CD4-positive, alpha-beta memory T cell (primary cell): ENCODE measurements at regions of chr1 and their contacts with region 1.

Region 1: DNA sequence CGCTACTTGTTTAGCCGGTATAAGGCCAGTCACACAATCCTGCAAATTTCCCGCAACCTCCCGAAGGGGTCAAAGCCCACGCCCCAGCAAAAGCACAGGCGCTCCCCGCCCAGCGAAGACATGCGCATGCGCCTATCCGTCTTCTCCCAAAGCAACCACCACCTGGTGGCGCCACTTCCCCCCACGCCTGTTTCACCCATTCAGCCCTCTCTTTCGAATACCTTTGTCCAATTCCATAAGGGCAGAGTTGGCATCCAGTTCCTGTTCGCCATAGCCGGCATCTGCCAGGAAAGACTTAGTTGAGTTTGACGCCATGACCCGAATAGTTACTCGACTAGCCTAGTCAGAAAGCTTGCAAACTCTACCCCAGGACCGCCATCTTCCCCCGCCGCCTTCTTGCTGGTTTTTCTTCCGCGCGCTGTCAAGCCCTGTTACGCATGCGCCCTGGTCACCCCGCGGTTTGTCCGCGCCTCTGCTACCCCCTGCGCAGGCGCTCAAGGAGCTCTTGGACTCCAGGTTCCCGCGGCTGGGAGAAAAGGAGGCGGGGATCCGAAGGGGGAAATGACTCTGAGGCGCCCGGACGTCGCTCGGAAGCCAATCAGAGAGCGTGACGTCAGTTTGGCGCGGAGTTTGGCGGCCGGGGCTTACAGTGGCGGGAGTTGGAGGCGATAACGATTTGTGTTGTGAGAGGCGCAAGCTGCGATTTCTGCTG is at the starts of genes DTL and INTS7:
- DNase-seq: peak; percentile 99
- H3K4me3 ChIP-seq: peak within 1 kb of the TSS; percentile 68 to 78
- H3K4me3 Mint-ChIP-seq: peak within 1 kb of the TSS; percentile 90 to 99 (median 98)
- H3K27ac ChIP-seq: peak within 1 kb of the TSS; percentile 75
- H3K27ac Mint-ChIP-seq: peak within 1 kb of the TSS; percentile 92 to 99 (median 98)
- H3K4me1 ChIP-seq: peaks cover 58% of the 10 kb centered on the region
- H3K4me1 Mint-ChIP-seq: peaks cover 36 to 70% (median 48%) of the 10 kb centered on the region in 4 donors
- H3K27me3 ChIP-seq: no peaks in the 10 kb centered on the region
- H3K27me3 Mint-ChIP-seq: no peaks in the 10 kb centered on the region
- total RNA-seq, gene DTL: 0.06 to 0.15 TPM
- total RNA-seq, gene INTS7: 9.5 to 12.4 TPM

Region 2: GRCh38 chr1:211680752-211681327 is 354.4 kb before region 1 on chr1:
- CTCF ChIA-PET with region 1: interaction called, 53 read pairs
- POLR2A ChIA-PET with region 1: interaction called, 13 read pairs
- intact Hi-C with region 1: loop called (anchors 1 kb)
- DNase-seq: peak; percentile 76 to 83 (median 82)
- H3K4me3 ChIP-seq: no peak overlapping the region
- H3K4me3 Mint-ChIP-seq: peak overlapping the region in 4 of 8 donors; percentile 0 to 56 (median 17)
- H3K27ac ChIP-seq: peak overlapping the region; percentile 61
- H3K27ac Mint-ChIP-seq: peak overlapping the region; percentile 77 to 98 (median 92)
- H3K4me1 ChIP-seq: peaks cover 15% of the 10 kb centered on the region
- H3K4me1 Mint-ChIP-seq: peaks cover 9 to 26% (median 12%) of the 10 kb centered on the region in 4 donors
- H3K27me3 ChIP-seq: no peaks in the 10 kb centered on the region
- H3K27me3 Mint-ChIP-seq: no peaks in the 10 kb centered on the region

Region 3: GRCh38 chr1:212012034-212012740 is 23.1 kb before region 1 on chr1:
- CTCF ChIA-PET with region 1: interaction called, 28 read pairs
- POLR2A ChIA-PET with region 1: no interaction called
- intact Hi-C with region 1: loop called (anchors 1 kb)
- DNase-seq: peak; percentile 42 to 66 (median 53)
- H3K4me3 ChIP-seq: no peak overlapping the region
- H3K4me3 Mint-ChIP-seq: no peak overlapping the region
- H3K27ac ChIP-seq: no peak overlapping the region
- H3K27ac Mint-ChIP-seq: peak overlapping the region in 1 of 7 donors; percentile 3
- H3K4me1 ChIP-seq: no peaks in the 10 kb centered on the region
- H3K4me1 Mint-ChIP-seq: peaks cover 0 to 7% (median 4%) of the 10 kb centered on the region in 4 donors
- H3K27me3 ChIP-seq: no peaks in the 10 kb centered on the region
- H3K27me3 Mint-ChIP-seq: no peaks in the 10 kb centered on the region

Region 4: DNA sequence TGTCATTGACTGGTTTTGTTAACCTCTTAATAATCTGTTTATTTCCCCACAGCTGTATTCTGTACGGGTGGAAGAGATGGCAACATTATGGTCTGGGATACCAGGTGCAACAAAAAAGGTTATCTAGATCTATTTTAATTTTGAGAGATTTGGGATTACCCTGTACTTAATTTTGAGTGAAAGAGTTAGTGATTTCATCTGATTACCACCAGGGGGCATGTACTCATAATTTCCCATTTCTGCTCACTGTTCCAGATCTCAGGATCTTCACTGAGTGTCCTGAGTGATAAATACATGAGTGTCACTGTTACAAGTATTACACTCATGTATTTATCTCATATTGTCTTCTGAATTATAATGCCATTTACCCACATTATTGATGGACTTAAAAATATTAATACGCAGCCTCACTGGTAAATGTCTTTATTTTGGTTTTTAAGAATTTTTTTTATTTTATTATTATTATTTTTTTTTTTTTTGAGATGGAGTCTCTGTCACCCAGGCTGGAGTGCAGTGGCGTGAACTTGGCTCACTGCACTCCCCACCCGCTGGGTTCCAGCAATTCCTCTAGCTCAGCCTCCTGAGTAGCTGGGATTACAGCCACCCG is 27.7 kb after region 1 on chr1:
- CTCF ChIA-PET with region 1: interaction called, 18 read pairs
- POLR2A ChIA-PET with region 1: interaction called, 5 read pairs
- intact Hi-C with region 1: no loop called
- DNase-seq: peak in 4 of 5 donors; percentile 37 to 45 (median 38)
- H3K4me3 ChIP-seq: no peak overlapping the region
- H3K4me3 Mint-ChIP-seq: no peak overlapping the region
- H3K27ac ChIP-seq: no peak overlapping the region
- H3K27ac Mint-ChIP-seq: no peak overlapping the region
- H3K4me1 ChIP-seq: no peaks in the 10 kb centered on the region
- H3K4me1 Mint-ChIP-seq: no peaks in the 10 kb centered on the region
- H3K27me3 ChIP-seq: no peaks in the 10 kb centered on the region
- H3K27me3 Mint-ChIP-seq: no peaks in the 10 kb centered on the region

Region 5: DNA sequence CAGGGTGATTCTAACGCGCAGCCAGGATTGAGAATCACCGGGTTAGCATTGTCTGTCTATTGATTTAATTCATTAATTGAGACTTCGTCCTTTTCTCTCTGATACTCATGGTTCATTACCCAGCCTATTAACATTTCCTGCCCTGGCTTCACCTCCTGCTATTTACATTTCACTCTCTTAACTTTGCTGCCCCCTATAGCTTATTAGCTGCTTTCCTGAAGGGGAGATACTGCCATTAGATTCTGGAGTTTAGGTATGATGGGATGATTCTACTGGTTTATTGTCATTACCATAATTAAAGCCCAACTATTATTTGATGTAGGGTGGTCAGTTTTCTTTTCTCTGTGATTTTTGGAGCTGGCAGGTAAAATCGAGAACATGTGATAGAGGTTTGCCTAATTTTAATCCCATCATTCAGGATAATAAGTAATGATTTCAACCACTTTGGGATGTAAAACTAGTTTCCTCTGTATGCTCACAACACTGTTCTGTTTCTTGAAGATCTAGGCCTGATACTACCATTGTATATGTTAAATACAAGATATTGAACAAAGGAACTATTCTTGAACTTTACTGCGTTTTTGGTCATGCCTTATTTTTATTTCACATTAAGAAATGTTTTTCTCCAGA is 256.3 kb after region 1 on chr1:
- CTCF ChIA-PET with region 1: interaction called, 32 read pairs
- POLR2A ChIA-PET with region 1: interaction called, 40 read pairs
- intact Hi-C with region 1: no loop called
- DNase-seq: peak in 4 of 5 donors; percentile 57 to 70 (median 64)
- H3K4me3 ChIP-seq: no peak overlapping the region
- H3K4me3 Mint-ChIP-seq: peak overlapping the region; percentile 27 to 70 (median 60)
- H3K27ac ChIP-seq: no peak overlapping the region
- H3K27ac Mint-ChIP-seq: peak overlapping the region in 4 of 7 donors; percentile 0 to 54 (median 16)
- H3K4me1 ChIP-seq: peaks cover 87% of the 10 kb centered on the region
- H3K4me1 Mint-ChIP-seq: peaks cover 66 to 91% (median 81%) of the 10 kb centered on the region in 4 donors
- H3K27me3 ChIP-seq: no peaks in the 10 kb centered on the region
- H3K27me3 Mint-ChIP-seq: no peaks in the 10 kb centered on the region

Region 6: GRCh38 chr1:212791676-212792395 is 756.6 kb after region 1 on chr1 and contains the starts of genes NSL1 and TATDN3:
- CTCF ChIA-PET with region 1: interaction called, 3 read pairs
- POLR2A ChIA-PET with region 1: no interaction called
- intact Hi-C with region 1: loop called (anchors 1 kb)
- DNase-seq: peak; percentile 88 to 94 (median 90)
- H3K4me3 ChIP-seq: peak within 1 kb of the TSS; percentile 96 to 100
- H3K4me3 Mint-ChIP-seq: peak within 1 kb of the TSS; percentile 92 to 99 (median 96)
- H3K27ac ChIP-seq: peak within 1 kb of the TSS; percentile 82
- H3K27ac Mint-ChIP-seq: peak within 1 kb of the TSS; percentile 94 to 98 (median 96)
- H3K4me1 ChIP-seq: peaks cover 48% of the 10 kb centered on the region
- H3K4me1 Mint-ChIP-seq: peaks cover 23 to 50% (median 36%) of the 10 kb centered on the region in 4 donors
- H3K27me3 ChIP-seq: no peaks in the 10 kb centered on the region
- H3K27me3 Mint-ChIP-seq: no peaks in the 10 kb centered on the region
- total RNA-seq, gene NSL1: 38.0 to 38.5 TPM
- total RNA-seq, gene TATDN3: 13.8 to 17.2 TPM